Naive thymus-derived CD4-positive, alpha-beta T cell (primary cell): ENCODE measurements at regions of chr9 and their contacts with region 1.

Region 1: DNA sequence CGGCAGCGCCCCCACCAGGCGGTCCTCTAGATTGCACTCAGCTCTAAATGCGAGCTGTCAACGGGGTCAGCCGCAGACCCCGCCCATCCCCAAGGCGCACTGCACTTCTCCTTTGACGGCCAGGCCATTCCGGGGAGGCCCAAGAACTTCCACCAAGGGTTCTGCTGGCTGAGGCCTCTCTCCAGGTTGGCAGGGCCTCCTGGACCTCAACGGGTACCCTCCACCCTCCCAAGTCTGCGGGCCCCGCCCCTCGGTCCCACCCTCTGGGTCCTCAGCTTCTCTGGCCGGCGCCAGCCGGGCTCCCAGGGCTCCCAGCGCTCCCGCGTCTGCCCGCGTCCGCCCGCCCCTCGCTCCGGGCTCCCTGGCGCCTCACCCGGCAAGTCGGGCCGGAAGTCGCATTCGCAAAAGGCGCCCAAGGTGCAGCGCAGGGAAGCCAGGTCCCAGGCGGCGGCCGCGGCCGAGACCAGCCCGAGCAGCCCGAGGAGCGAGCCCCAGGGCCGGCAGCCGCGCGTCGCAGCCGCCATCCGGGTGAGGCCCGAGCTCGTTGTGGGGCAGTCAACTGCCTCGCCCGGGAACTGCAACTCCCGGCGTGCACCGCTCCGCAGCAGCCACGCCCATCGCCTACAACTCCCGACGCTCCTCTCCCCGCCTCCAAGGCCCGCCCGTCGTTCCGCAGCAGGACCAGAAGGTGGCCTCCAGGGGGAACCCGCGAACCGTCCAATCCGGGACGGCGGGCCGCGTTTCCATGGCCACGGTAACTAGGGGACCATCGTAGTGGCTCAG is at the start of gene TOR2A:
- DNase-seq: peak; percentile 97 to 99 (median 98)
- ATAC-seq: peak; percentile 97
- H3K4me3 ChIP-seq: peak within 1 kb of the TSS; percentile 73
- H3K4me3 Mint-ChIP-seq: peak within 1 kb of the TSS; percentile 82 to 97 (median 88)
- H3K27ac ChIP-seq: peak within 1 kb of the TSS; percentile 88
- H3K27ac Mint-ChIP-seq: peak within 1 kb of the TSS; percentile 89 to 98 (median 93)
- H3K4me1 ChIP-seq: peaks cover 14 to 15% of the 10 kb centered on the region in 2 donors
- H3K4me1 Mint-ChIP-seq: peaks cover 0 to 21% (median 18%) of the 10 kb centered on the region in 7 donors
- H3K27me3 ChIP-seq: no peaks in the 10 kb centered on the region
- H3K27me3 Mint-ChIP-seq: no peaks in the 10 kb centered on the region
- total RNA-seq, gene TOR2A: 9.5 to 22.3 (median 10.8) TPM

Region 2: GRCh38 chr9:126947529-126947928 is 787.4 kb before region 1 on chr9:
- CTCF ChIA-PET with region 1: no interaction called
- POLR2A ChIA-PET with region 1: no interaction called
- intact Hi-C with region 1: loop called in 1 of 2 experiments (anchors 10 kb)
- DNase-seq: peak in 2 of 9 donors; percentile 4 to 13
- ATAC-seq: no peak
- H3K4me3 ChIP-seq: no peak overlapping the region
- H3K4me3 Mint-ChIP-seq: no peak overlapping the region
- H3K27ac ChIP-seq: no peak overlapping the region
- H3K27ac Mint-ChIP-seq: no peak overlapping the region
- H3K4me1 ChIP-seq: no peaks in the 10 kb centered on the region
- H3K4me1 Mint-ChIP-seq: peaks cover 0 to 5% (median 0%) of the 10 kb centered on the region in 7 donors
- H3K27me3 ChIP-seq: no peaks in the 10 kb centered on the region
- H3K27me3 Mint-ChIP-seq: peaks cover 0 to 27% (median 17%) of the 10 kb centered on the region in 5 donors

Region 3: DNA sequence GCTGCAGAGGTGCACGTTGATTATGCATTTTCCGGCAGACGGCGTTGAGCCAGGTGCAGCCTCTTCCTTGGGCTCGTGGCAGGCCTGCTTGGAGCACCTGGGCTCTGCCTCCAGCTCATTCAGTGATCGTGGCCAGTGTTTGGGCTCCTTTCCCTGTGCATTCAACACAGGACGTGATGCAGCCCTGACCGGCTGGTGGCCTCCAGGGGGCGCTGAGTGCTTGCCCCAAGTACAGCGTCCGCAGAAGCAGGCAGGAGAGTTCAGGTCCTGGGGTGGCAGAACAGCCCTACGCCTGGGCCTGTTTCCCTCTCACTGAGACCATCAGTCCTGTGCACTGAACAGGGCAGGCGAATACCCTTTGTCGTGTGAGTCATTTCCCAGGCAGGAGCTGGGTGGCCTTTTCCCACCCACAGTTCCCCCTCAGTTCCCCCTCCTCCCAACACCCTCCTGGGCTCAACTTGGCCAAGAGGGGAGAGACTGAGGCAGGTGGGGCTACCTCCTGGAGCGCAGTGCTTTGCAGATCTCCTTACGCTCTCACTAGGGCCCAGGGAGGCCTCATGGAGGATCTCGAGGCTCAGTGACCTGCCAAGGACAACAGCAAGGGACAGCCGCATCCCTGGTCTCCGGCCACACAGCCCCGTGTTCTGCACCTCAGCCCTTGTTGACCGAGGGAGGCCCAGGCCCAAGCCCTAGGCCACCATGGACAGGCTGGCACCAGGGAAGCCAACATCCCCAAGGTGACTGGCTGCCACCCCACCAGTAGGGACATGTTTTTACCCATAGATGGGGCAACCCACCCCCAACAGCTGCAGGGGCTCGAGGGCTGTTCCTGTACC is 230.8 kb before region 1 on chr9:
- CTCF ChIA-PET with region 1: interaction called, 5 read pairs
- POLR2A ChIA-PET with region 1: no interaction called
- intact Hi-C with region 1: loop called in 1 of 2 experiments (anchors 1 kb)
- DNase-seq: peak; percentile 65 to 81 (median 75)
- ATAC-seq: peak; percentile 87
- H3K4me3 ChIP-seq: no peak overlapping the region
- H3K4me3 Mint-ChIP-seq: no peak overlapping the region
- H3K27ac ChIP-seq: no peak overlapping the region
- H3K27ac Mint-ChIP-seq: peak overlapping the region in 1 of 9 donors; percentile 69
- H3K4me1 ChIP-seq: no peaks in the 10 kb centered on the region
- H3K4me1 Mint-ChIP-seq: peaks cover 0 to 4% (median 0%) of the 10 kb centered on the region in 7 donors
- H3K27me3 ChIP-seq: no peaks in the 10 kb centered on the region
- H3K27me3 Mint-ChIP-seq: no peaks in the 10 kb centered on the region

Region 4: GRCh38 chr9:127698985-127699670 is 35.8 kb before region 1 on chr9:
- CTCF ChIA-PET with region 1: no interaction called
- POLR2A ChIA-PET with region 1: no interaction called
- intact Hi-C with region 1: no loop called
- DNase-seq: peak; percentile 63 to 81 (median 78)
- ATAC-seq: peak; percentile 99
- H3K4me3 ChIP-seq: peak overlapping the region; percentile 62
- H3K4me3 Mint-ChIP-seq: peak overlapping the region; percentile 73 to 87 (median 84)
- H3K27ac ChIP-seq: peak overlapping the region; percentile 26
- H3K27ac Mint-ChIP-seq: peak overlapping the region; percentile 10 to 91 (median 77)
- H3K4me1 ChIP-seq: peaks cover 6 to 7% of the 10 kb centered on the region in 2 donors
- H3K4me1 Mint-ChIP-seq: peaks cover 5 to 13% (median 12%) of the 10 kb centered on the region in 7 donors
- H3K27me3 ChIP-seq: no peaks in the 10 kb centered on the region
- H3K27me3 Mint-ChIP-seq: peaks cover 0 to 2% (median 0%) of the 10 kb centered on the region in 5 donors

Region 5: DNA sequence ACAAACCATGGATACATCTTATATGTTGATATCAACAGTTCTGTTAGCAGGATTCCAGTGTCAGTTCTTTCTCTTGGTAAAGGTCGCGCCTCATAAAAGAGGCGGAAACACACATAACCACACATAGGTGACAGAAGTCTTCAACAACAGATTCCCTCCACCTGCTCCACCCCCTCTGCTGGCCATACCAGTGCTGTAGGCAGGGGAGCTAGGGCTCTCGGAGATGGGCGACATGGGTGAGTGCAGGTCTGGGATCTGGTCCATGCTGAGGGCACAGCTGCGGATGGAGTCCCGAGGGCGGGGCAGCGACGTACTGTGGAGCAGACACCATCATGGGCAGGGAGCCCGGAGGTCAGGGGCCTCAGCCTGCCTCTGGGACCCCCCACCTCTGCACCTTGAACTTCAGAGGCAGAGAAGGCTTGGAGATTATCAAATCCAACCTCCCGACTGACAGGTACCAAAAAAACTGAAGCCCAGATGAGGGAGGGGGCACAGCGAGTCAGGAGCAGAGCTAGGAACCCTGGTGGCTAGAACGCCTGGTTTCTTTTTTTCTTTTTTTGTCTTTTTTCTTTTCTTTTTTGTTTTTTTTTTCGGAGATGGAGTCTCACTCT is 12.1 kb after region 1 on chr9:
- CTCF ChIA-PET with region 1: interaction called, 16 read pairs
- POLR2A ChIA-PET with region 1: interaction called, 4 read pairs
- intact Hi-C with region 1: no loop called
- DNase-seq: peak in 7 of 9 donors; percentile 38 to 64 (median 46)
- ATAC-seq: peak; percentile 89
- H3K4me3 ChIP-seq: no peak overlapping the region
- H3K4me3 Mint-ChIP-seq: peak overlapping the region in 9 of 10 donors; percentile 37 to 83 (median 66)
- H3K27ac ChIP-seq: peak overlapping the region; percentile 31
- H3K27ac Mint-ChIP-seq: peak overlapping the region; percentile 40 to 92 (median 87)
- H3K4me1 ChIP-seq: no peaks in the 10 kb centered on the region
- H3K4me1 Mint-ChIP-seq: peaks cover 5 to 27% (median 11%) of the 10 kb centered on the region in 7 donors
- H3K27me3 ChIP-seq: no peaks in the 10 kb centered on the region
- H3K27me3 Mint-ChIP-seq: no peaks in the 10 kb centered on the region

Region 6: GRCh38 chr9:127862075-127863011 is 127.4 kb after region 1 on chr9:
- CTCF ChIA-PET with region 1: no interaction called
- POLR2A ChIA-PET with region 1: interaction called, 8 read pairs
- intact Hi-C with region 1: loop called in 1 of 2 experiments (anchors 1 kb)
- DNase-seq: peak in 8 of 9 donors; percentile 12 to 50 (median 36)
- ATAC-seq: peak; percentile 84
- H3K4me3 ChIP-seq: peak overlapping the region; percentile 14
- H3K4me3 Mint-ChIP-seq: peak overlapping the region; percentile 38 to 75 (median 54)
- H3K27ac ChIP-seq: peak overlapping the region; percentile 64
- H3K27ac Mint-ChIP-seq: peak overlapping the region; percentile 85 to 95 (median 92)
- H3K4me1 ChIP-seq: peaks cover 35 to 41% of the 10 kb centered on the region in 2 donors
- H3K4me1 Mint-ChIP-seq: peaks cover 25 to 57% (median 52%) of the 10 kb centered on the region in 7 donors
- H3K27me3 ChIP-seq: no peaks in the 10 kb centered on the region
- H3K27me3 Mint-ChIP-seq: no peaks in the 10 kb centered on the region

Region 7: GRCh38 chr9:127916665-127917613 is 182.0 kb after region 1 on chr9 and contains the start of gene ST6GALNAC4:
- CTCF ChIA-PET with region 1: interaction called, 30 read pairs
- POLR2A ChIA-PET with region 1: interaction called, 5 read pairs
- intact Hi-C with region 1: loop called (anchors 1 kb)
- DNase-seq: peak; percentile 82 to 97 (median 89)
- ATAC-seq: peak; percentile 98
- H3K4me3 ChIP-seq: peak within 1 kb of the TSS; percentile 86
- H3K4me3 Mint-ChIP-seq: peak within 1 kb of the TSS; percentile 76 to 91 (median 86)
- H3K27ac ChIP-seq: peak within 1 kb of the TSS; percentile 81
- H3K27ac Mint-ChIP-seq: peak within 1 kb of the TSS; percentile 69 to 95 (median 87)
- H3K4me1 ChIP-seq: peaks cover 28 to 39% of the 10 kb centered on the region in 2 donors
- H3K4me1 Mint-ChIP-seq: peaks cover 29 to 64% (median 51%) of the 10 kb centered on the region in 7 donors
- H3K27me3 ChIP-seq: no peaks in the 10 kb centered on the region
- H3K27me3 Mint-ChIP-seq: peaks cover 0 to under 1% (median 0%) of the 10 kb centered on the region in 5 donors
- total RNA-seq, gene ST6GALNAC4: 28.0 to 51.0 (median 36.1) TPM